ENCODE measurements at regions of chr9 and their contacts with region 1.

Region 1: DNA sequence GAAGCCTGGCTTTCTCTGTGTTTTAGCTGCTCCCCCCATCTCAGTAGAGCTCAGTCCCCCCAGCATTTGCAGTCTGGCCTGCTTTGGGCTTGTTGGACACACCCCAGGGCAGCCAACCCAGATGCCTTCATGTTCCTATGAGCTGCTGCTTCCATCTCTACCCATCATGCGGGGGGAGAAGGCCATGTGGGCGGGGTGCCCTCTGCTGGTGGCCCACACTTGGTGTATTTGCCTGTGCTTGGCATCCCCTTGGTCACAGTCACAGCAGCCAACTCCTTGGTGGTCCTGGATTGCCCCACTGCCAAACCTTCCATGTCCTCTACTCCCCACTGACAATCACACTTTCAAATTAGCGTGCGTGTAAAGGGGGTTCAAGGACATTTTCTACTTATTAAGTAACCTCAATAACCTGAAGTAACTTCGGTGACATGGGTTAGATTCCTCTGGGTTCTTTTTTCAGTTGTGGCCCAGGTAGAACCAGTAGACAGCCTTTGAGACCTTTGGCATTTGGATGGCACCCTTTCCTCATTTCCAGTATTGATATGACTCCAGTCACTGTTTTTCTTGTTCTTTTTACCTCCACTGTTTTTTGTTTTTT is 42.8 kb downstream of the SNX30 start:
- DNase-seq: peak; percentile 72
- ATAC-seq: peak; percentile 99
- H3K4me3 Mint-ChIP-seq: no peak overlapping the region
- H3K27ac Mint-ChIP-seq: no peak overlapping the region
- H3K4me1 Mint-ChIP-seq: peaks cover 24% of the 10 kb centered on the region
- H3K27me3 Mint-ChIP-seq: no peaks in the 10 kb centered on the region
- CTCF ChIP-seq: no peak

Region 2: DNA sequence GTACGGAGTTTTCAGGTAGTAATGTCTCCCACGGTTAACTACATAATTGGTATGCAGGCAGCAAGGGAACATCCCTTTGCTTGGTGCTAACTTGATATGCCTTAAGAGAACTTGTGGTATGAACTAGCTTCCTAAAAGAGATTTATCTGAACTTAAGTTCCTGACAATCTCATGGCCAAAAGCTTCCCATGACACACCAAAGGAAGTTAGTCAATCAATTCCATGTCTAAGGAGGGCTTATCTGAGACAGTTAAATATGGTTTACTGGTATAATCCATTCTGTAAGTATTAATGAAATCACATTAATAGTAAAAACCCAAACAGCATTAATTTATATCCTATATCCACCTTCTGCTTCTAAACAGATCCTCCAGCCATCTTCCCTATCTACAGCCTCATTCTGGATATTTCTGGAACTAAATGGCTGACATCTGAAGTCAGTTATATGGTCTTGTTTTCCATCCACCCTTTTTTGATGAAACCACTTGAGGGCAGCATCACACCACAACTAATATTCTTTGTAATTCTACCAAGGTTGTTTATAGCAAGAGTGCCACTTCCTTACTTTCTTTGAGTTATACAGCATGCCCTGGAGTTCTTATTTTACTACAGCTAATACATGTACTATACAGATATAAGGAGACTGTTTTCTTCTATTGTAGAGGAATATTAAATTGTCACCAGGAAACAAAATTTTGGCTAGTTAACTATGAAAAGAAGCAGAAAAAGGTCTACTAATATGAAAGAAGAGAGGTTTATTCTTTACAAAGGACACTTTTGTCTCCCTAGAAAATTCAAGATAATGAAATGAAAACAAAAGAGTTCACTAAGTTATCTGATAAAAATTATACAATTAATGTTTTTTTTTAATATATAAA is 1033.3 kb before region 1 on chr9:
- CTCF ChIA-PET with region 1: interaction called, 3 read pairs
- POLR2A ChIA-PET with region 1: no interaction called
- intact Hi-C with region 1: loop called (anchors 1 kb)
- DNase-seq: no peak
- ATAC-seq: peak; percentile 84
- H3K4me3 Mint-ChIP-seq: no peak overlapping the region
- H3K27ac Mint-ChIP-seq: no peak overlapping the region
- H3K4me1 Mint-ChIP-seq: peaks cover 4% of the 10 kb centered on the region
- H3K27me3 Mint-ChIP-seq: no peaks in the 10 kb centered on the region
- CTCF ChIP-seq: peak; percentile 55

Region 3: DNA sequence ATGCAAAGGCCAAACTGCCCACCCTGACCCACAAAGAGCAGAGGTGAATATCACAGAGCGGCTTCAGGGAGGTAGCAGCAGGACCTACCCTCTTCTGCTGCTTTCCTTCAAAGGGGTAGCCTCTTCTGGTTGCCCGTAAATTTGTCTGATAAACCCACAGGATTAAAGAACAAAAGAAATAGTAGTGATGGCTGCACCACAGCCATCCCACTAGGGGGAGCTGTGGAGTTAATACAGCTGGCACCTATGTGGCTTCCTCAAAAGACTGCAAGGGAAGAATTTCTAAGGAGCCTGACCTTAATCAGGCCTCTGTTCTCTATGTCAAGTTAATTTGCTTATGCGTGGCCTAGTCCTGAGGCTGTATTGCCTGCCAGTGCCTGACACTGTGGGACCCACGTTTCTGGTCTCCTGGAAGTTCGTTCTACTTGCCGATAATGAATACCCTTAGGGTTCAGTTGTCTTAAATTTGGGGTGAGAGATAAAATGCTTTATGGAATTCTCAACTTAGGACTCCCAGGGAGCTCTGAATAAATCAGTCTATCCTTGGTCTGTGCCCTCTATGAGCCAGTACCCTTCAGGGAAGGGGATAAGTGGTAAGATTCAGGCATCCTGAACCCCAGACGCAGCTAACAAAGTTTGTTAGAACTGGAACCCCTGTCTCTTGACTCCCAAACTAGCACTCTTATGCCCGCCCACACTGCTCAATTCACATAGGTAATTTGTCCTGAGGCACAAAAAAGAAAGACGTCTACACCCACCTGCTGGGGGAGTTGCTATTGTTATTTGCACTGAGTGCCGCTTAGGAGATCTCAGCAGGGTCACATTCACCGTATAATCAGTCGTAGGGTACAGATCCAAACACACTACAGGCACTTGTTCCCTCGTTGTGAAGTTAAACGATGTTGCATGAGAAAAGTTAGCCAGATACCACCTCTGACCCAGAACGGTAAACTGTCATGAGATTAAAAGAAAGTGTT is 695.3 kb before region 1 on chr9:
- CTCF ChIA-PET with region 1: interaction called, 4 read pairs
- POLR2A ChIA-PET with region 1: no interaction called
- intact Hi-C with region 1: loop called (anchors 5 kb)
- DNase-seq: no peak
- ATAC-seq: peak; percentile 95
- H3K4me3 Mint-ChIP-seq: no peak overlapping the region
- H3K27ac Mint-ChIP-seq: no peak overlapping the region
- H3K4me1 Mint-ChIP-seq: peaks cover 38% of the 10 kb centered on the region
- H3K27me3 Mint-ChIP-seq: no peaks in the 10 kb centered on the region
- CTCF ChIP-seq: peak; percentile 34

Region 4: DNA sequence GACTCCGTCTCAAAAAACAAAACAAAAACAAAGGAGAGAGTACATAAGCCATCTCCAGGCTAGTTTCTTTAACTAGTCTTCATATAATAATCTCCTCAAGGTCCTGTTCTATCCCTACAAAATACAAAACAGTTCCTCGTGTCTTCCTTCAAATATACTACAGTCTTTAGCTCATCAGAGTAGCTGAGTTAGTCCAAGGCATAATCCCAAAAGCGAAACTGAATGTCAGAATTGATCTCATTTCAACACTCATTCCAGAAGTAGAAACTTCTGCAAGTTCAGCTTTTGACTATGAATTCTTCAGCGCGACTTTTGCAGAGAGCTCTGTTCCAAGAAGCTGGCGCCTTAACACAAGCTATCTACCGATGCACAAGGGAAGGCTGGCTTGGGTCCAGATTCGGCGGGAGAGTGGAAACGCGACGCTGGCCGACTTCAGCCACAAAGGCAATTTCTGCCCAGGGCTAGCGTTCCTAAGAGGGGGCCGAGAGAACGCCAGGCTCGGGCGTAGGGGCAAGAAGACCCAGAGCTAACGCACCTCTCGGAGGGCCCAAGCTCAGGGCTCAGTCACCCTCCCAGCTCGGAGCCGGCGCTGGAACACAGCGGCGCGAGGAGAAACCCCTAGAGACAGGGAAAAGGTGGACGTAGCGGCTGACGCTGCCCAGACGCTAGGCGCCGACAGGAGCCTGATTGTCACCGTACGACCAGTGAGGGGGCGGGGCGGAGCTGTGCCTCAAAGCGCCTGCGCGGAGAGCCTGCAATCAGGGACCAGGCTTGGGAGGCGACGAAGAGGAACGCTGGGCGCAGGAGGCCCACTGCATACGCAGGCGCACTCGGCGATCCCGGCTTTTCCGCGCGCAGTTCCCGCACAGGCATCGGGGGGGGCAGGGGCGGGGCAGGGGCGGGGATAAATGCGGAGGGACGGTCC is 413.9 kb before region 1 on chr9:
- CTCF ChIA-PET with region 1: interaction called, 6 read pairs
- POLR2A ChIA-PET with region 1: interaction called, 6 read pairs
- intact Hi-C with region 1: loop called (anchors 1 kb)
- DNase-seq: peak; percentile 96
- ATAC-seq: peak; percentile 91
- H3K4me3 Mint-ChIP-seq: peak overlapping the region; percentile 99
- H3K27ac Mint-ChIP-seq: peak overlapping the region; percentile 95
- H3K4me1 Mint-ChIP-seq: peaks cover 59% of the 10 kb centered on the region
- H3K27me3 Mint-ChIP-seq: no peaks in the 10 kb centered on the region
- CTCF ChIP-seq: no peak

Region 5: GRCh38 chr9:112486221-112487007 is 306.9 kb before region 1 on chr9 and contains the start of gene KIAA1958:
- CTCF ChIA-PET with region 1: interaction called, 6 read pairs
- POLR2A ChIA-PET with region 1: no interaction called
- intact Hi-C with region 1: loop called (anchors 1 kb)
- DNase-seq: peak; percentile 75
- ATAC-seq: peak; percentile 89
- H3K4me3 Mint-ChIP-seq: peak within 1 kb of the TSS; percentile 97
- H3K27ac Mint-ChIP-seq: peak within 1 kb of the TSS; percentile 89
- H3K4me1 Mint-ChIP-seq: peaks cover 19% of the 10 kb centered on the region
- H3K27me3 Mint-ChIP-seq: no peaks in the 10 kb centered on the region
- CTCF ChIP-seq: no peak
- total RNA-seq, gene KIAA1958: 5.8 and 7.4 TPM in 2 replicates

Region 6: DNA sequence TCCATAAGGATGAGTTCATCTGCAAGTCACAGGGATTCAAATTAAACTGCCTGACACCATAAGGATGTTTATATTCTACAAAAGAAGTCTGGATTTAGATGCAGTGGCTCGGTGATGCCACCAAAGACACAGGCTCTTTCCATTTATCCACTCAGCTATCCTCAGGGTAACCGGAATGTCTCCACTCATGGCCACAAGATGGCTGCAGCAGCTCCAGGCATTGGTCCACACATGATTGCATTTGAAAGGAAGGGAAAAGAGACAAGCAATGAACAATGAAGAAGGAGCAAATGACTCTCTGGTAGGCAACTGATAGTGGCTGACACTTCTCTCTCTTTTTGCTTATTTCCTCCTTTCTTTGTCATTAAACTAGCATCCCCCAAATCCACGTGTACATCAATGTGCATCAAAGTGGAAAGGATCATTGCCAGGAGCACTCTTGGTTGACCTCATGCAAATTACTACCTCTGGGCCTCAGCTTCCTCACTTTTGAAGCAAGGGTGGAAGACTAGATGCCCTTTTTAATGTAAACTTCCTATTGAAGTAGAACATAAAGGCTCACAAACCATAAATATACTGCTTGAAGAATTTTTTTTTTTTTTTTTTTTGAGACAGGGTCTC is 50.0 kb before region 1 on chr9:
- CTCF ChIA-PET with region 1: interaction called, 3 read pairs
- POLR2A ChIA-PET with region 1: interaction called, 10 read pairs
- intact Hi-C with region 1: no loop called
- DNase-seq: no peak
- ATAC-seq: peak; percentile 70
- H3K4me3 Mint-ChIP-seq: peak overlapping the region; percentile 7
- H3K27ac Mint-ChIP-seq: peak overlapping the region; percentile 13
- H3K4me1 Mint-ChIP-seq: peaks cover 35% of the 10 kb centered on the region
- H3K27me3 Mint-ChIP-seq: peaks cover 6% of the 10 kb centered on the region
- CTCF ChIP-seq: no peak

Region 7: DNA sequence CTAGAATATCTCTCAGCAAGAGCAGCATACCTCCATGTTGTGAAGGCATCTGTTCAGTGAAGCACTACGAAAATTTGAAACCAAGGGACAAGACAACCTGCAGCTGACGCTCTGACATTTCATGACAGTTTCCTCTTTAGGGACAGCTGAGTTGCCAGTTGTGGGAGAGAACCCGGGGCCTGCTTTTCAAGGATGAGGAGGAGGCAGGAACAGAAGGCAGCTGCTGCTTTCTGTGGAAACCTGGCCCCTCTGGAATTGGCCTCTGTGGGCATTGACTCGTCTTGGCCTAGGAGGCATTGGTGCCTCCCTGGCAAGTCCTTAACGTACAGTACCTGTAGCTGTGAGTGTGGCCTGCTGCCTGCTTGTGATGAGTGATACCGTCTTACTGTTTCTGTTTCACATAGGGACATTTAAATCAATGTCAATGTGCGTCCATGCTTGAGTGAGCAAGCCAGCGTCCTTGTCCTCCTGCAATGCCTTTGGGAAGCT is 75.8 kb after region 1 on chr9:
- CTCF ChIA-PET with region 1: no interaction called
- POLR2A ChIA-PET with region 1: no interaction called
- intact Hi-C with region 1: no loop called
- DNase-seq: no peak
- ATAC-seq: peak; percentile 25
- H3K4me3 Mint-ChIP-seq: no peak overlapping the region
- H3K27ac Mint-ChIP-seq: no peak overlapping the region
- H3K4me1 Mint-ChIP-seq: peaks cover 28% of the 10 kb centered on the region
- H3K27me3 Mint-ChIP-seq: no peaks in the 10 kb centered on the region
- CTCF ChIP-seq: no peak

Region 8: GRCh38 chr9:112997236-112997941 is 204.1 kb after region 1 on chr9:
- CTCF ChIA-PET with region 1: no interaction called
- POLR2A ChIA-PET with region 1: no interaction called
- intact Hi-C with region 1: no loop called
- DNase-seq: no peak
- ATAC-seq: no peak
- H3K4me3 Mint-ChIP-seq: no peak overlapping the region
- H3K27ac Mint-ChIP-seq: no peak overlapping the region
- H3K4me1 Mint-ChIP-seq: no peaks in the 10 kb centered on the region
- H3K27me3 Mint-ChIP-seq: no peaks in the 10 kb centered on the region
- CTCF ChIP-seq: no peak

Region 9: DNA sequence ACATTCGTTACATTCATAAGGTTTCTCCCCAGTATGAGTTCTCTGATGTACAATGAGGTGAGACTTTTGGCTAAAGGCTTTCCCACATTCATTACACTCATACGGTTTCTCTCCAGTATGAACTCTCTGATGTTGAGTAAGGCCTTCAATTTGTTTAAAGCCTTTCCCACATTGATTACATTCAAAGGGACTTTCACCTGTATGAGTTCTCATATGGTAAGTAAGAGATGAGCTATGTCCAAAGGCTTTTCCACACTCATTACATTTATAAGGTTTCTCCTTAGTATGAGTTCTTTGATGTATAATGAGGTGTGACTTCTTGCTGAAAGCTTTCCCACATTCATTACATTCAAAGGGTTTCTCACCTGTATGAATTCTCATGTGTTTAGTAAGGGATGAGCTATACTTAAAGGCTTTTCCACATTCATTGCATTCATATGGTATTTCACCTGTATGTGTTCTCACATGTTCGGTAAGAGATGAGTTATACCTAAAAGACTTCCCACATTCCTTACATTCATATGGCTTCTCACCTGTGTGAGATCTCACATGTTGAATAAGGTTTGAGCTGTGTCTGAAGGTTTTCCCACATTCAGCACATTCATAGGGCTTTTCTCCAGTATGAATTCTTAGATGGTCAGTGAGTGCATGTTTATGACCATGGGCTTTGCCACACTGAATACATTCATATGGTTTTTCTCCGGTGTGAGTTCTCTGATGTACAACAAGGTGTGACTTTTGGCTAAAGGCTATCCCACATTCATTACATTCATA is 249.8 kb after region 1 on chr9:
- CTCF ChIA-PET with region 1: no interaction called
- POLR2A ChIA-PET with region 1: no interaction called
- intact Hi-C with region 1: no loop called
- DNase-seq: no peak
- ATAC-seq: no peak
- H3K4me3 Mint-ChIP-seq: no peak overlapping the region
- H3K27ac Mint-ChIP-seq: no peak overlapping the region
- H3K4me1 Mint-ChIP-seq: no peaks in the 10 kb centered on the region
- H3K27me3 Mint-ChIP-seq: no peaks in the 10 kb centered on the region
- CTCF ChIP-seq: no peak

Region 10: DNA sequence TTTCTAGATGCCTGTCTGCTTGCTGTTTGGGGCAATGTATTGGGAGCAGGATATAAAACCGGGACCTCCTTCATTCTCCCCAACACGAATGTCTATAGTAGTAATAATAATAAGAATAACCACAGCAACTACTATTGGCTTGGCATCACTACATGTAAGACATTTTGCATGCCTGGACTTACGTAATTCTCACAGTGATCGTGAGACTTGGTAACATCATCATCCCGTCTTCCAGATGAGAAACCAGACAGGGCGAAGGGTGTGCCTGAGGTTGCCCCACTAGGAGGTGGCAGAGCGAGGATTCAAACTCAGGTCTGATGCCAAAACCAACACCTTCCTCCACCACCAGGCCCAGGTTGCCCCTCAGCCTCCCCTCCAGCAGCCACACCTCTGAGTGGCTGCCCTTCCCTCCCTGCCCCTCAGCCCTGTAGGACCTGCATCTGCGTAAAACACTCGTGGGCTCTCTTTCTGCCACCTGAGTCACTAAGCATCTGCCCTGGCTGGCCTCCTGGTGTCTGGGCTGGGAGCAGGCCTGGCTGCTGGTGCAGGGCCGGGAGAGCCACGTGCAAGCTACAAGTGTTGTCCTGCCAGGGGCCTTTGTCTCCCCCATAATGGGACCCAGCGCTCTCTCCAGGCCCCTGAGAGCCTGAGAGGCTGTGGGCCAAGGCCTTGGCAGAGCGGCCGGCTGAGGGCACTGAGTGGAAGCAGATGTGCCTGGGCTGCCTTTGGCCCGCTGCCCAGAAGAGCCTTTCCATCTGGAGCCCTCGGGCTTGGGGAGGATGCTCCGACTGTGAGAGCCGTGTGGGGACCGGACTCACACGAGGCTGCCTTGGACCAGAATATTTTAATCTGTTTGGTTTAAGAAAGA is 855.5 kb after region 1 on chr9:
- CTCF ChIA-PET with region 1: no interaction called
- POLR2A ChIA-PET with region 1: no interaction called
- intact Hi-C with region 1: no loop called
- DNase-seq: no peak
- ATAC-seq: no peak
- H3K4me3 Mint-ChIP-seq: no peak overlapping the region
- H3K27ac Mint-ChIP-seq: no peak overlapping the region
- H3K4me1 Mint-ChIP-seq: no peaks in the 10 kb centered on the region
- H3K27me3 Mint-ChIP-seq: peaks cover 12% of the 10 kb centered on the region
- CTCF ChIP-seq: no peak